Heart left ventricle (tissue), 16 donors: ENCODE measurements at regions of chr11 and their contacts with region 1.

Region 1: DNA sequence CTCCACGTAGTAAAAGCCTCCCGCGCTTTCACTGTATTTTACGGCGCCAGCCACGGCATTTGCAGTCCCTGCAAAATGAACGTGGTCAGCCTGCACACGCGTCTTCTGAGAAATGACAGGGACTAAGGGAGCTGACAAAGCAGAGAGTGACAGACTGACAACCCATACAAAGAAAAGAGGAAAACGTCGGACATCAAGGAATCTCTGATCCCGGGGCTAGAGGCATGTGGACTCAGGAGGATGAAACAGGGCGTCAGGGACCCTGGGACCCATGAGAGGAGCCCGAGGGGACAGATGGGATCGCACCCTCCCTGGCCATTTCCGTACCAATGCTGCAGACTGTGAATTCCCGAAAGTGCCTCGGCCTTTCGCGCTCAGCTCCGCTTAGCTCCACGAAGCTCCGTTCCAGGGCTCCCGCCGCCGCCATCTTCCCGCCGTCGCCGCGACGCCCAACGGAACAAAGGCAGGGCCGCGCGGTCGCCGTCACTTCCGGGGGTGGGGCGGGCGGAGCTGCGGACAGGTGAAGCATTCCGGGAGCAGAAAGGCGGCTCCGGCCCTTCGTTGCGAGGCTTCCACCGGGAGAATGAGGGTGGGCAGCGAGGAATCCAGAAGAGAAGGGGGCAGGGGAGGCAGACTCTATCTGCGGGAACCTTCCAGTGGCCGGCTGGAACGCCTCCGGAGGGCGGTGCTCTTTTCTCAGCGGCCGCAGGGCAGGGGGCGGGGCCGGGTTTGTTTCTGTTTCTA is at the start of gene NUP160:
- DNase-seq: peak; percentile 87 to 92 (median 89)
- ATAC-seq: peak; percentile 72 to 96 (median 94)
- H3K4me3 ChIP-seq: peak within 1 kb of the TSS; percentile 70 to 98 (median 78)
- H3K27ac ChIP-seq: peak within 1 kb of the TSS; percentile 56 to 96 (median 92)
- H3K4me1 ChIP-seq: peaks cover 0 to 39% (median 23%) of the 10 kb centered on the region in 12 donors
- H3K27me3 ChIP-seq: no peaks in the 10 kb centered on the region
- CTCF ChIP-seq: peak in 1 of 12 donors; percentile 26
- POLR2A ChIP-seq: peak in 1 of 2 donors; percentile 58
- total RNA-seq, gene NUP160: 9.4 to 19.7 (median 14.1) TPM

Region 2: GRCh38 chr11:47373876-47374720 is 474.0 kb before region 1 on chr11:
- intact Hi-C with region 1: loop called in 6 of 10 experiments (anchors 5 to 10 kb)
- DNase-seq: peak; percentile 83 to 92 (median 85)
- ATAC-seq: peak; percentile 44 to 86 (median 76)
- H3K4me3 ChIP-seq: peak overlapping the region in 1 of 12 donors; percentile 70
- H3K27ac ChIP-seq: peak overlapping the region in 3 of 12 donors; percentile 12 to 96 (median 26)
- H3K4me1 ChIP-seq: peaks cover 0 to 25% (median 0%) of the 10 kb centered on the region in 12 donors
- H3K27me3 ChIP-seq: no peaks in the 10 kb centered on the region
- CTCF ChIP-seq: peak; percentile 87 to 98 (median 96)
- POLR2A ChIP-seq: no peak

Region 3: GRCh38 chr11:47399860-47400767 is 447.9 kb before region 1 on chr11:
- intact Hi-C with region 1: loop called in 1 of 10 experiments (anchors 10 kb)
- DNase-seq: peak in 2 of 5 donors; percentile 31 to 45
- ATAC-seq: peak; percentile 45 to 82 (median 69)
- H3K4me3 ChIP-seq: peak overlapping the region in 11 of 12 donors; percentile 34 to 66 (median 53)
- H3K27ac ChIP-seq: peak overlapping the region; percentile 64 to 94 (median 86)
- H3K4me1 ChIP-seq: peaks cover 0 to 30% (median 16%) of the 10 kb centered on the region in 12 donors
- H3K27me3 ChIP-seq: no peaks in the 10 kb centered on the region
- CTCF ChIP-seq: no peak
- POLR2A ChIP-seq: peak in 1 of 2 donors; percentile 48

Region 4: GRCh38 chr11:47642099-47642855 is 205.8 kb before region 1 on chr11 and contains the start of gene MTCH2:
- intact Hi-C with region 1: loop called in 5 of 10 experiments (anchors 5 to 10 kb)
- DNase-seq: peak; percentile 96 to 97 (median 97)
- ATAC-seq: peak; percentile 97 to 98 (median 98)
- H3K4me3 ChIP-seq: peak within 1 kb of the TSS; percentile 57 to 94 (median 80)
- H3K27ac ChIP-seq: peak within 1 kb of the TSS; percentile 49 to 97 (median 90)
- H3K4me1 ChIP-seq: peaks cover 0 to 20% (median 14%) of the 10 kb centered on the region in 12 donors
- H3K27me3 ChIP-seq: no peaks in the 10 kb centered on the region
- CTCF ChIP-seq: peak; percentile 5 to 68 (median 44)
- POLR2A ChIP-seq: peak in 1 of 2 donors; percentile 65
- total RNA-seq, gene MTCH2: 38.2 to 135 (median 102) TPM

Region 5: GRCh38 chr11:47766305-47767227 is 81.5 kb before region 1 on chr11:
- intact Hi-C with region 1: loop called in 4 of 10 experiments (anchors 2 to 5 kb)
- DNase-seq: peak; percentile 69 to 81 (median 74)
- ATAC-seq: peak in 3 of 4 donors; percentile 6 to 44 (median 35)
- H3K4me3 ChIP-seq: peak overlapping the region; percentile 63 to 99 (median 86)
- H3K27ac ChIP-seq: peak overlapping the region; percentile 90 to 100 (median 98)
- H3K4me1 ChIP-seq: peaks cover 0 to 39% (median 24%) of the 10 kb centered on the region in 12 donors
- H3K27me3 ChIP-seq: no peaks in the 10 kb centered on the region
- CTCF ChIP-seq: no peak
- POLR2A ChIP-seq: no peak

Region 6: GRCh38 chr11:47773882-47774281 is 74.2 kb before region 1 on chr11:
- intact Hi-C with region 1: loop called in 3 of 10 experiments (anchors 5 kb)
- DNase-seq: no peak
- ATAC-seq: no peak
- H3K4me3 ChIP-seq: no peak overlapping the region
- H3K27ac ChIP-seq: no peak overlapping the region
- H3K4me1 ChIP-seq: peaks cover 0 to 35% (median 2%) of the 10 kb centered on the region in 12 donors
- H3K27me3 ChIP-seq: no peaks in the 10 kb centered on the region
- CTCF ChIP-seq: no peak
- POLR2A ChIP-seq: no peak

Region 7: GRCh38 chr11:48109046-48109666 is 261.1 kb after region 1 on chr11:
- intact Hi-C with region 1: loop called in 2 of 10 experiments (anchors 10 kb)
- DNase-seq: no peak
- ATAC-seq: peak in 2 of 4 donors; percentile 38 to 57
- H3K4me3 ChIP-seq: peak overlapping the region in 7 of 12 donors; percentile 4 to 42 (median 30)
- H3K27ac ChIP-seq: peak overlapping the region in 1 of 12 donors; percentile 66
- H3K4me1 ChIP-seq: peaks cover 0 to 62% (median 15%) of the 10 kb centered on the region in 12 donors
- H3K27me3 ChIP-seq: no peaks in the 10 kb centered on the region
- CTCF ChIP-seq: peak in 6 of 12 donors; percentile 24 to 52 (median 44)
- POLR2A ChIP-seq: no peak